ENCODE measurements at regions of chr9 and their contacts with region 1.

Region 1: GRCh38 chr9:134067904-134068743 is at the start of gene BRD3:
- DNase-seq: peak; percentile 67 to 90 (median 82)
- H3K4me3 ChIP-seq: peak within 1 kb of the TSS; percentile 59 to 98 (median 82)
- H3K27ac ChIP-seq: peak within 1 kb of the TSS; percentile 77 to 100 (median 98)
- H3K27me3 ChIP-seq: no peaks in the 10 kb centered on the region
- CTCF ChIP-seq: peak in 11 of 56 donors; percentile 9 to 41 (median 18)
- total RNA-seq, gene BRD3: 28.4 to 69.2 (median 48.5) TPM

Region 2: GRCh38 chr9:133742849-133743444 is 325.2 kb before region 1 on chr9:
- intact Hi-C with region 1: no loop called
- DNase-seq: peak; percentile 58 to 88 (median 78)
- H3K4me3 ChIP-seq: no peak overlapping the region
- H3K27ac ChIP-seq: no peak overlapping the region
- H3K27me3 ChIP-seq: peaks cover 0 to 6% (median 0%) of the 10 kb centered on the region in 45 donors
- CTCF ChIP-seq: peak; percentile 68 to 99 (median 95)

Region 3: GRCh38 chr9:133862585-133863256 is 205.4 kb before region 1 on chr9:
- intact Hi-C with region 1: no loop called
- DNase-seq: peak in 5 of 10 donors; percentile 32 to 53 (median 47)
- H3K4me3 ChIP-seq: peak overlapping the region in 46 of 59 donors; percentile 0 to 57 (median 30)
- H3K27ac ChIP-seq: peak overlapping the region in 28 of 59 donors; percentile 2 to 69 (median 40)
- H3K27me3 ChIP-seq: no peaks in the 10 kb centered on the region
- CTCF ChIP-seq: peak in 26 of 56 donors; percentile 1 to 42 (median 19)

Region 4: GRCh38 chr9:134024828-134025605 is 43.1 kb before region 1 on chr9 and contains the start of gene BRD3OS:
- intact Hi-C with region 1: loop called (anchors 1 to 2 kb)
- DNase-seq: peak; percentile 85 to 97 (median 95)
- H3K4me3 ChIP-seq: peak within 1 kb of the TSS; percentile 67 to 95 (median 88)
- H3K27ac ChIP-seq: peak within 1 kb of the TSS in 55 of 59 donors; percentile 15 to 90 (median 80)
- H3K27me3 ChIP-seq: no peaks in the 10 kb centered on the region
- CTCF ChIP-seq: peak in 1 of 56 donors; percentile 11
- total RNA-seq, gene BRD3OS: 22.2 to 73.3 (median 53.2) TPM

Region 5: DNA sequence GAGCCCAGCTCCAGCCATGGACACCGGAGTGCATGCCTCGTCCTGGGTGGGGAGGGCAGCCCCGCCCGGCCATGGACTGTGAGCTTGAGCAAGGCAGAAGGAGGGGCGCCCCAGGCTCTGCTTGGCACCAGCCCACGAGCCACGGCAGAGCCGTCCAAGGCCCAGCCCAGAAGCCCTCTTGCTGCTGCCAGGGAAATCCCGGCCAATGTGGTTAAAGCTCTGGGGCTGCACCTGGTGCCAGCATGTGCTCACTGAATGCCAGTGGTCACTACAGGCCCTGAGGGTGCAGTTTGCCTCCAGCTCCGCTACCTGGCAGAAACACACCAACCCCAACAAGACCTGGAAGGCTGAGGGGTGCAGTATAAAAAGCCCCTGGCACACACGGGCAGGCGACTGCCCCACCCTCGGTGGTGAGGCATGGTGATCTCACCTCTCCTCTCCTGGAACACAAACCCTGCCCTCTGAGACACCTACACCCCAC is 12.1 kb before region 1 on chr9:
- intact Hi-C with region 1: no loop called
- DNase-seq: peak in 9 of 10 donors; percentile 58 to 89 (median 71)
- H3K4me3 ChIP-seq: peak overlapping the region in 9 of 59 donors; percentile 6 to 31 (median 26)
- H3K27ac ChIP-seq: peak overlapping the region in 39 of 59 donors; percentile 1 to 71 (median 39)
- H3K27me3 ChIP-seq: no peaks in the 10 kb centered on the region
- CTCF ChIP-seq: no peak

Region 6: DNA sequence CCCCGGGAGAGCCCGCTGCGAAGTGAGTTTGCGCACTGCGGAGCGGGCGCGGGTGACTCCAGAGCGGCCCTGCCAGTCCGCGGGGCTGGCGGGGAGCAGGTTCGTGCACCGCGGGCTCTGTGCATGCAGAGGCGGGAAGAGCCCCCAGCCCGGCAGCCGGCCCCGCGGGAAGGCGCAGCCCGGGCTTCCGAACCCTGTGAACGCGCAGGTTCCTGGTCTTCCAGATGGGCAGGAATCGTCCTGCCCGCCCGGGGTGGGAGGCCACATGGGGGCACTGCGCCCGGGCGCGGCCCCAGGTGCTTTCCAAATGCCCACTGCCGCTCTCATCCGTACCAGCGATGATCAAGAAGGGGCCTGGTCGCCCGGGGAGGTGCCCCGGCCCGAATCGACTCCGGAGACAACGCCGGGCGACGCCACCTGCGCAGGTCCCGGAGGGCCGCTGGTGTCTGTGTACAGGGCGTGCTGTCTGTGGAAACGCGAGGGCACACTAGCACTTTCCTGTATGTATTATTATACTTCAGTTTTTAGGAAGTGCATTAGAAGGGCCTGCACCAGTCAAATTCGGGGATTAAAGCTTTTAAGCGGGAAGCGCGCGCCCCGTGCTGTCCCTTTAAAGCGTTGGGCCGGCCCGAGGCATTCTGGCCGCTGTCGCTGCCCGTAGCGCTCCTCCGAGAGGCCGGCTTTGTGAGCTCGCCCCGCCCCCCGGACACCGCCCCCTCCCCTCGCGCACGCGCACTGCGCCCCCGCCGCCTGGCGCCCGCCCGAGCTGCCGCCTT is 67.4 kb after region 1 on chr9 and contains the start of gene WDR5:
- intact Hi-C with region 1: loop called (anchors 2 to 5 kb)
- DNase-seq: peak; percentile 88 to 93 (median 91)
- H3K4me3 ChIP-seq: peak within 1 kb of the TSS; percentile 74 to 100 (median 96)
- H3K27ac ChIP-seq: peak within 1 kb of the TSS; percentile 77 to 100 (median 96)
- H3K27me3 ChIP-seq: no peaks in the 10 kb centered on the region
- CTCF ChIP-seq: peak in 46 of 56 donors; percentile 4 to 62 (median 39)
- total RNA-seq, gene WDR5: 22.8 to 42.2 (median 29.5) TPM

Region 7: GRCh38 chr9:134163353-134164196 is 95.5 kb after region 1 on chr9:
- intact Hi-C with region 1: loop called (anchors 1 to 2 kb)
- DNase-seq: peak in 9 of 10 donors; percentile 38 to 74 (median 56)
- H3K4me3 ChIP-seq: no peak overlapping the region
- H3K27ac ChIP-seq: peak overlapping the region in 3 of 59 donors; percentile 57 to 87 (median 75)
- H3K27me3 ChIP-seq: no peaks in the 10 kb centered on the region
- CTCF ChIP-seq: peak in 31 of 56 donors; percentile 7 to 49 (median 25)

Region 8: DNA sequence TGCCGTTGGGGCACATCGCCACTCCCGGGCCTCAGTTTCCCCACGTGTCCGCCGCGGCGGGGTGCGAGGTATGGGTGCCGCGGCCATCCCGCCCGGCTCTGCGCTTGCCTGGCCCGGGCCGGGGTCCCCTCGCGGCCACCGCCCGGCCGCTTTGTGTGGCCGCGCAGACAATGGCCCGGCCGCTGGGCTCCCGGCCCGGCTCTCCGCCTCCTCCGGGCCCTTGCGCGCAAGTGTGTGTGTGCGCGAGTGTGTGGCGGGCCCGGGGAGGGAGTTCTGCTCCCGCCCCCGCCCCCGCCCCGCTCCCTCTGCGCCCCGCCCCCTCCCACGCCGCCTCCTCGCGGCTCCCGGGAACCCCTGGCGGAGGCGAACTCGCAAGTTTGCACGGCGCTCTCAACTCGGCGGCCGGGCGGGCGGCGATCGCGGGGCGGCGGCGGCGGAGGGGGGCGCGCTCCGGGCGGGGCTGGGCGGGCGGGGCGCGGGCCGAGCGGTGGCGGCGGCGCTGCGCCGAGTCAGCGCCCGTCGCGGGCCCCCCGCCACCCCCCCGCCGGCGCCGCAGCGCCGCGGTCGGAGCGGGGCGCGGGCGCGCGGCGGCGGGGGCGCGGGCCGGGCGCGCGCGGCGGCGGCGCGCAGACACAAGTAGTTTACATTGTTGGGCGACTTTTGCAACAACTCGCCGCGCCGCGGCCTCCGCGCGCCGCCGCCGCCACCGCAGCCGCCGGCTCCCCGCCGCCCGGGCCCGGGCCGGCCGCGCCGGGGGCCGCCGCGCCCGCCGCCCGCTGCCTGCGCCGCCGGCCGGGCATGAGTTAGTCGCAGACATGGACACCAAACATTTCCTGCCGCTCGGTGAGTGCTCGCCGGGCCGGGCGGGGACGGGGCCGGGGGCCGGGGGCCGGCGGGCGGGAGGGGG is 257.9 kb after region 1 on chr9 and contains the start of gene RXRA:
- intact Hi-C with region 1: loop called in 1 of 2 experiments (anchors 5 kb)
- DNase-seq: peak in 9 of 10 donors; percentile 42 to 78 (median 57)
- H3K4me3 ChIP-seq: peak within 1 kb of the TSS; percentile 57 to 95 (median 76)
- H3K27ac ChIP-seq: peak within 1 kb of the TSS; percentile 18 to 96 (median 90)
- H3K27me3 ChIP-seq: no peaks in the 10 kb centered on the region
- CTCF ChIP-seq: peak in 15 of 56 donors; percentile 7 to 32 (median 19)
- total RNA-seq, gene RXRA: 32.1 to 133 (median 55.1) TPM

Region 9: GRCh38 chr9:134449221-134449894 is 381.2 kb after region 1 on chr9:
- intact Hi-C with region 1: loop called (anchors 10 kb)
- DNase-seq: peak; percentile 75 to 96 (median 92)
- H3K4me3 ChIP-seq: no peak overlapping the region
- H3K27ac ChIP-seq: peak overlapping the region in 16 of 59 donors; percentile 3 to 65 (median 29)
- H3K27me3 ChIP-seq: no peaks in the 10 kb centered on the region
- CTCF ChIP-seq: peak; percentile 63 to 98 (median 92)

Region 10: GRCh38 chr9:134707031-134707680 is 639.0 kb after region 1 on chr9:
- intact Hi-C with region 1: no loop called
- DNase-seq: no peak
- H3K4me3 ChIP-seq: no peak overlapping the region
- H3K27ac ChIP-seq: peak overlapping the region in 2 of 59 donors; percentile 41 to 43
- H3K27me3 ChIP-seq: peaks cover 0 to 4% (median 0%) of the 10 kb centered on the region in 45 donors
- CTCF ChIP-seq: no peak